ENCODE measurements at regions of chr16 and their contacts with region 1.

Region 1: DNA sequence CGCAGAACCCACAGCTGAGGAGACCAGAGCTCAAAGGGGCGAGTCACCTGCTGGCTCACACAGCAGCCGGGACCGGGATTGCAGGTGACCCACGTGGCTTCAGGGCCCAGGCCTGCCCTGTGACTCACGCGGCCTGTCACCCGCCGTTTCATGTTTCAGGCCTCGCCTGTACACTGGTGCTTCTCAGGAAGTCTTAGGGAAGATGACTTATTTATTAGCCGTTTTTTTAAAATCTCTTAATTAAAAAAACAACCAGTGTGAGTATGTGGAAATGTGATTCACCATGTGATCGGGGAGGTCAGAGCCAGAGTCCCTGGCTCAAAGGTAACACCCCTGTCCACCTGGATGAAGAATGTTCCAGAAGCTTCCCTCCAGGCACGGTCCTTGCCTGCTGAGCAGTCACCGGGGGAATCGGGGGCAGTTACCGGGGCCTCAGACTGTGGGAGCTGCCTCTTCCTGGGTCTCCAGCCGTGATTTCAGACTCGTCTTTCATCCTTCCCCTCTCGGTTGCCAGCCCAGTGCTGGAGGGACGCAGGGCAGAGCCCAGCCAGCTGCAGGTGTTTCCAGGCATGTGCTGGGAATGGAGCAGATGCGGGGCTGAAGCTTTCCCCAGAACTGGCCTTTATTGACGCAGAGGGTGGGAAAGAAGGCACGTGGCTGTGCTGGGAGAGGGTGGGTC is 49.3 kb downstream of the CMIP start:
- DNase-seq: peak; percentile 80 to 85 (median 82)
- ATAC-seq: peak; percentile 59
- H3K4me3 ChIP-seq: no peak overlapping the region
- H3K27ac ChIP-seq: peak overlapping the region; percentile 97
- H3K4me1 ChIP-seq: peaks cover 63 to 69% of the 10 kb centered on the region in 2 experiments
- H3K27me3 ChIP-seq: no peaks in the 10 kb centered on the region
- CTCF ChIP-seq: no peak
- EP300 ChIP-seq: no peak
- POLR2A ChIP-seq: no peak
- RAD21 ChIP-seq: no peak

Region 2: GRCh38 chr16:80802138-80802537 is 691.8 kb before region 1 on chr16:
- CTCF ChIA-PET with region 1: no interaction called
- POLR2A ChIA-PET with region 1: no interaction called
- in situ Hi-C with region 1: no loop called
- intact Hi-C with region 1: no loop called
- DNase-seq: no peak
- ATAC-seq: no peak
- H3K4me3 ChIP-seq: no peak overlapping the region
- H3K27ac ChIP-seq: no peak overlapping the region
- H3K4me1 ChIP-seq: peaks cover 0 to 3% of the 10 kb centered on the region in 2 experiments; a peak in 2 of 5 replicates
- H3K27me3 ChIP-seq: peaks cover 0 to 10% of the 10 kb centered on the region in 2 experiments; a peak in 1 of 5 replicates
- CTCF ChIP-seq: no peak
- EP300 ChIP-seq: no peak
- POLR2A ChIP-seq: no peak
- RAD21 ChIP-seq: no peak

Region 3: DNA sequence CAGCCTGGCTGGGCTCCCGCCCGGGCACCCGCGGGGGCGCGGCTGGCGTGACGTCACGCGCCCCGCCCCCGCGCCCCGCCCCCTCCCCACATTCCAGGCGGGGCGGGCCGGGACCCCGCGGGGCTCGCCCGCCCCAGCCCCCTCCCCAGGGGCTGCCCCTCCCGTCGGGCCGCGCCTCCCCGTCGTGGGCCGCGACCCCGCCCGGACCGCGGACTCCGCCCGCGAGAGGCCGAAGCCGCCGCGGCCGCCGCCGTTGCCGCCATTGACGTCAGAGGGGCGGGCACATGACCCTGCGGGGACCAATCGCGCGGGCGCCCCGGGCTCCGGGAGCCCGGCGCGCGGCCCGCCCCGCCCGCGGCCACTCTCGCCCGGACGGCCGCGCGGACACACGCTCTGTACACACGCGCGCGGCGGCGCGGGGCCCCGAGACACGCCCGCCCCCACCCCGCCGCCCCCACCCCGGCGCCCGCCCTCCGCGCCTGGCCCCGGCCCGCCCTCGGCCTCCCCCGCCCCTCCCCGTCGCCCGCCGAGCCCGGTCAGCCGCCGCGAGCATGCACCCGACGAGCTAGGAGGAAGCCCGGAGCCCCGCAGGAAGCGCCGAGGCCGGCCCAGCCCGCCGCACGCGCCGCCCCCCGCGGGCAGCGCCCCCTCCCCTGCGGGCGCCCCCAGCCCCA is 49.3 kb before region 1 on chr16 and contains the start of gene CMIP:
- CTCF ChIA-PET with region 1: no interaction called
- POLR2A ChIA-PET with region 1: interaction called, 3 read pairs
- in situ Hi-C with region 1: no loop called
- intact Hi-C with region 1: loop called (anchors 1 kb)
- DNase-seq: peak; percentile 92 to 99 (median 98)
- ATAC-seq: peak; percentile 75
- H3K4me3 ChIP-seq: peak within 1 kb of the TSS; percentile 54
- H3K27ac ChIP-seq: peak within 1 kb of the TSS; percentile 70
- H3K4me1 ChIP-seq: peaks cover 32 to 43% of the 10 kb centered on the region in 2 experiments
- H3K27me3 ChIP-seq: peaks cover 32 to 41% of the 10 kb centered on the region in 2 experiments
- CTCF ChIP-seq: no peak
- EP300 ChIP-seq: no peak
- POLR2A ChIP-seq: no peak
- RAD21 ChIP-seq: no peak
- polyA plus RNA-seq, gene CMIP: 0.94 to 1.9 TPM

Region 4: GRCh38 chr16:81469710-81470535 is 24.0 kb before region 1 on chr16:
- CTCF ChIA-PET with region 1: interaction called, 3 read pairs
- POLR2A ChIA-PET with region 1: interaction called, 5 read pairs
- in situ Hi-C with region 1: no loop called
- intact Hi-C with region 1: loop called (anchors 1 kb)
- DNase-seq: peak in 2 of 4 experiments; percentile 51 to 68
- ATAC-seq: peak; percentile 82
- H3K4me3 ChIP-seq: no peak overlapping the region
- H3K27ac ChIP-seq: peak overlapping the region; percentile 70
- H3K4me1 ChIP-seq: peaks cover 44 to 54% of the 10 kb centered on the region in 2 experiments
- H3K27me3 ChIP-seq: no peaks in the 10 kb centered on the region
- CTCF ChIP-seq: no peak
- EP300 ChIP-seq: peak; percentile 78
- POLR2A ChIP-seq: no peak
- RAD21 ChIP-seq: peak; percentile 42 to 43; a peak in 3 of 4 replicates

Region 5: GRCh38 chr16:81481207-81481821 is 12.6 kb before region 1 on chr16:
- CTCF ChIA-PET with region 1: no interaction called
- POLR2A ChIA-PET with region 1: interaction called, 18 read pairs
- in situ Hi-C with region 1: no loop called
- intact Hi-C with region 1: loop called (anchors 1 kb)
- DNase-seq: peak; percentile 54 to 91 (median 70)
- ATAC-seq: peak; percentile 77
- H3K4me3 ChIP-seq: no peak overlapping the region
- H3K27ac ChIP-seq: peak overlapping the region; percentile 77
- H3K4me1 ChIP-seq: peaks cover 61 to 80% of the 10 kb centered on the region in 2 experiments
- H3K27me3 ChIP-seq: no peaks in the 10 kb centered on the region
- CTCF ChIP-seq: peak; percentile 14 to 35 (median 21); a peak in 3 of 6 replicates
- EP300 ChIP-seq: peak; percentile 88
- POLR2A ChIP-seq: no peak
- RAD21 ChIP-seq: peak; percentile 64 to 69

Region 6: GRCh38 chr16:81632392-81633146 is 138.7 kb after region 1 on chr16:
- CTCF ChIA-PET with region 1: no interaction called
- POLR2A ChIA-PET with region 1: interaction called, 3 read pairs
- in situ Hi-C with region 1: no loop called
- intact Hi-C with region 1: loop called (anchors 10 kb)
- DNase-seq: peak; percentile 59 to 88 (median 70)
- ATAC-seq: peak; percentile 22
- H3K4me3 ChIP-seq: no peak overlapping the region
- H3K27ac ChIP-seq: peak overlapping the region; percentile 79
- H3K4me1 ChIP-seq: peaks cover 65 to 71% of the 10 kb centered on the region in 2 experiments
- H3K27me3 ChIP-seq: no peaks in the 10 kb centered on the region
- CTCF ChIP-seq: no peak
- EP300 ChIP-seq: peak; percentile 37; the same call in 1 of the 2 replicates
- POLR2A ChIP-seq: no peak
- RAD21 ChIP-seq: no peak

Region 7: GRCh38 chr16:81696961-81697615 is 203.2 kb after region 1 on chr16:
- CTCF ChIA-PET with region 1: no interaction called
- POLR2A ChIA-PET with region 1: interaction called, 4 read pairs
- in situ Hi-C with region 1: no loop called
- intact Hi-C with region 1: loop called (anchors 10 kb)
- DNase-seq: peak; percentile 57 to 83 (median 74)
- ATAC-seq: peak; percentile 93
- H3K4me3 ChIP-seq: no peak overlapping the region
- H3K27ac ChIP-seq: no peak overlapping the region; the same call in 2 of the 3 replicates
- H3K4me1 ChIP-seq: peaks cover 2 to 18% of the 10 kb centered on the region in 2 experiments; a peak in 4 of 5 replicates
- H3K27me3 ChIP-seq: no peaks in the 10 kb centered on the region
- CTCF ChIP-seq: peak; percentile 90 to 96 (median 94)
- EP300 ChIP-seq: no peak; the same call in 1 of the 2 replicates
- POLR2A ChIP-seq: no peak
- RAD21 ChIP-seq: peak; percentile 83 to 92